ENCODE measurements at regions of chr2 and their contacts with region 1.

Region 1: DNA sequence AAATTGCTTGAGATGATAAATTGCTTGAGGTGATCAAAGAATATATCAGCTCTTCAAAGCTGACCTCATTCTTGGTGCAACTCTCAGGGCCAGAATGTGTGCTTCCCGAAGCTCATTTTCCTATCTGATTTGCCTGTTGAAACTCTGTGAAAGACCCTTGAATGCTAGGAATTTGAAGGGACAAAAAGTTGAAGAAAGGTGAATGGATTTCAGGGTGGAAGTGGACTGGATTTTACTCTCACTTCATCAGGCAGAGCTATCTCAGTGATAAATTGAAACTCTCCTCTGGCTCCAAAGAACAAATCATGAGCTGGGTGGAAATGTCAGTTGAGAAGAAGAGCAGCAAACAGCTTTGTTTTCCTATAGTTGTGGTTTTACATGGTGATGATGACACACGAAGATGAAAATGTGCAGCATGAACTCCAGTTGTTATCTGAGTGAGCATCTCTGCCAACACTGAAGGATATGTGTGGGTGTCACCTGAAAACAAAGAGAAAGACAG is 34.4 kb downstream of the CD28 start:
- DNase-seq: peak; percentile 51
- H3K4me3 Mint-ChIP-seq: peak overlapping the region; percentile 57
- H3K27ac Mint-ChIP-seq: peak overlapping the region; percentile 95
- H3K4me1 Mint-ChIP-seq: peaks cover 82% of the 10 kb centered on the region
- H3K27me3 Mint-ChIP-seq: no peaks in the 10 kb centered on the region

Region 2: DNA sequence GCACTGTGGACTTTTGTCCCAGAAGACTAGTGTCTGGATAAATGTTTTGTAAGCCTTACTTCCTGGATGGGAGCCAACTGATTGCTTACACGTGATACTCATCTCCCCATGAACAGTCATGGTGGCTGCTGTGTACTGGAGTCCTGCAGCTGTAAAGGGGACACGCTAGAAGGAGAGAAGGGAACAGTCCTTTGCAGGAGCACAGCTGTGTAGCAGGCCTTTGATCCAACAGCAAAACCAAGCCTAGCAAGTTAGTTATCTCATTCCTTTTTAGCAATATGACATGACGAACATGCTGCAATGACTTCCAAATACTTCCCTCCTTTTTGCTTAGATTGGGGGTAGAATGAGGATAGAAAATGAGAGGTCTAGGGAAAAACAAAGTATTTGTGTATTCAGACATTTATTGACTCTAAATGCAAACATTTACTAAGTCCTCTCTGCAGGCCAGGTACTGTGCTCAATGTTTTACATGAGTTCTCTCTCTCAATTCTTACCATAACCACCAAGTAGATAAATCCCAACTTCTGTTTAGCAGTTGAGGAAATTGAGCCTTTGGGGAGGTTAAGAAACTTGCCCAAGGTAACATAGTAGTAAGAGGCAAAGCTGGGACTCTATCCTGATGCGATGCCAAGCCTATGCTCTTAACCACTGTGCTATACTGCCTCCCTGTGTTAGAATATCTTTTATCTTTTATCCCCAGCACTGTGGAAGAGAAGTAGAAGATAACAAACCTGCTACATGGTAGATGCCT is 89.8 kb before region 1 on chr2:
- CTCF ChIA-PET with region 1: no interaction called
- POLR2A ChIA-PET with region 1: no interaction called
- DNase-seq: no peak
- H3K4me3 Mint-ChIP-seq: no peak overlapping the region
- H3K27ac Mint-ChIP-seq: no peak overlapping the region
- H3K4me1 Mint-ChIP-seq: peaks cover 11% of the 10 kb centered on the region
- H3K27me3 Mint-ChIP-seq: no peaks in the 10 kb centered on the region

Region 3: GRCh38 chr2:203718087-203718486 is 22.7 kb before region 1 on chr2:
- CTCF ChIA-PET with region 1: interaction called, 33 read pairs
- POLR2A ChIA-PET with region 1: interaction called, 859 read pairs
- DNase-seq: peak; percentile 80
- H3K4me3 Mint-ChIP-seq: peak overlapping the region; percentile 50
- H3K27ac Mint-ChIP-seq: peak overlapping the region; percentile 93
- H3K4me1 Mint-ChIP-seq: peaks cover 99% of the 10 kb centered on the region
- H3K27me3 Mint-ChIP-seq: no peaks in the 10 kb centered on the region

Region 4: GRCh38 chr2:203751685-203752271 is 10.9 kb after region 1 on chr2:
- CTCF ChIA-PET with region 1: interaction called, 25 read pairs
- POLR2A ChIA-PET with region 1: interaction called, 100 read pairs
- DNase-seq: no peak
- H3K4me3 Mint-ChIP-seq: no peak overlapping the region
- H3K27ac Mint-ChIP-seq: peak overlapping the region; percentile 47
- H3K4me1 Mint-ChIP-seq: peaks cover 46% of the 10 kb centered on the region
- H3K27me3 Mint-ChIP-seq: no peaks in the 10 kb centered on the region

Region 5: DNA sequence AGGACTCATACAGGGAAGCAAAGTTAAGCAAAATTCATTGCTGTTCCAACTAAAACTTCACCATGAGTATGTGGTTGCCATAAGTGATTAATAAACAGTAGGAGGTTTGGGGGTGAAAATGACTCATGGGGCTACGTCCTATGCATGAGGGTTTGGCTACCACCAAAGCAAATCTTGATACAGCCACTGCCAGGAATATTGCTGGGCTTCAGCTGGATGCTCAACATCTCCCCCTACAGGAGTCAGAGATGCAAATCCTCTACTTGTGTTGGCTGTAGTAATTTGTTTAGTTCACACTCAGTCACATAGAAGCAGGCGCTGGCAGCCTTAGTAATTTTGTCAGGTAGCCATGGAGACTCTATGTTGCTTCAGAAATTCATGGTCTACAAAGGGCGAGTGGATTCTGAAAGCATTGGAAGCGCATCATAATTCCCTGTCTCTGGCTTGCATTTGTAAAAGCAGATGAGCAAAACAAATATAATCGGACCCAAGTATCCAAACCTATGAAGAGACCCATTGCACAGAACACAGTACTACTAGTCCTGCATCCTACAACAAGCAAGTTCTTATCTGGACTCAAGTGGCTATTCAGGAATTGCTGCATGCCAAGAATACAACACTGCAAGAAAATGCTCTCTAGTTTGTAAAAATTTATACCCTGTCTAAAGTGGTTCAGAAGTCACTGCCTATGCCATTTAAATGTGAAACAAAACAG is 41.6 kb after region 1 on chr2:
- CTCF ChIA-PET with region 1: interaction called, 3 read pairs
- POLR2A ChIA-PET with region 1: interaction called, 15 read pairs
- DNase-seq: peak; percentile 73
- H3K4me3 Mint-ChIP-seq: no peak overlapping the region
- H3K27ac Mint-ChIP-seq: no peak overlapping the region
- H3K4me1 Mint-ChIP-seq: peaks cover 55% of the 10 kb centered on the region
- H3K27me3 Mint-ChIP-seq: no peaks in the 10 kb centered on the region

Region 6: GRCh38 chr2:203840655-203841205 is 99.9 kb after region 1 on chr2:
- CTCF ChIA-PET with region 1: no interaction called
- POLR2A ChIA-PET with region 1: no interaction called
- DNase-seq: no peak
- H3K4me3 Mint-ChIP-seq: no peak overlapping the region
- H3K27ac Mint-ChIP-seq: no peak overlapping the region
- H3K4me1 Mint-ChIP-seq: peaks cover 32% of the 10 kb centered on the region
- H3K27me3 Mint-ChIP-seq: peaks cover 2% of the 10 kb centered on the region

Region 7: DNA sequence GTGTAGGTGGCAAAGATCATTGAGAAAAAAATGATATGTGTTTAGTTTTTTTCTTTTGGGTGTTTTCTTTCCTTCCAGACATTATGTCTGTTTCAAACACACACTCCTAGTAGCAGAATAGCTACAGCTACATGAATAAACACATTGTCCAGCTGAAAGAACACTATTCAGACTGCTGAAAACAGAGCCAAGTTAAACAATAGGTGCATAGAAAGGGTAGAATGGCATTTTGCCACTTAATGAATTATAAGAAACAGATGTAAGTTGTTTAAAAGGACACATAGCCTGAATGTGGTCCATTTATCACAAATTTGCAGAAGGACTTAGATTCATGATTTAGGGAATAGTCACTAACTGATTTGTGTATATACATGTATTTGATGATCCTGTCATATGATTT is 146.8 kb after region 1 on chr2:
- CTCF ChIA-PET with region 1: no interaction called
- POLR2A ChIA-PET with region 1: interaction called, 13 read pairs
- DNase-seq: no peak
- H3K4me3 Mint-ChIP-seq: no peak overlapping the region
- H3K27ac Mint-ChIP-seq: peak overlapping the region; percentile 83
- H3K4me1 Mint-ChIP-seq: peaks cover 80% of the 10 kb centered on the region
- H3K27me3 Mint-ChIP-seq: no peaks in the 10 kb centered on the region